Calu3 (cell line): ENCODE measurements at regions of chr10 and their contacts with region 1.

Region 1: DNA sequence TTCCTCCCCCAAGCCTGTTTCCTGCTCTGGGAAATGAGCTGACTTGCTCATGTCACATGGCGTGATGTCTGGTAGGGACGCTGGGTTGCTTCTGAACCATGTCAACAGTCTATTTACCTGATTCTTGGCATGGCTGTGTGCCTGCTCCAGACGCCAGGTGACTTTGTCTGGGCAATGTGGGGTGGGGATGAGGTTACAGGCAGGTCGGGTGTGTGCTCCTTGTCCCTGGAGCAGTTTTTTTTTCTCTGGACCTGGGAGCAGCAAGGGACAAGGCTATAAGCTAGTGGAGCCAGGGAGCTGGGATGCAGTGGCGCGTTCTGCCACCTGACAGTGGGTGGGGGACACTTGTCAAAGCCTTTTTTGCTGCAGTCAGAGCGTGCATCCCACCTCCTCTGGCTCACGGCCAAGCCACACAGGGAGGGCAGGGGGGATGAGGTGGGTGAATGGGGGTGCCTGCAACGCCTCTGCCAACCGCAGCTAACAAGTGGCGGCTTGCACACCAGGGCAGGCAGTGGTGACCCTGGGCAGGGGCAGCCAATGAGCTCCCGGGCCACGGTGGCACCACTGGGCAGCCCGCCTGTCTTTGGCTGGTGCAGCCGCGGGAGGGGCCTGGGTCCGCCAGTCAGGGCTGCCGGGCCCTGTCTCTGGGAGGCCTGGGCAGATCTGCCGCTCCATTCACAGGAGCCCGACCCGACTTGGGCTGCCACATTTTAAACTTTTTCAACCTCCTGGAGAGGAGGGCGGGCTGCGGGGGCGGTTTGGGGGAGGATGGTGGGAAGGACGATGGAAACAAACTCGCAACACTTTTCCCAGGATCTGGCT is 22.9 kb downstream of the DNAJB12 start:
- DNase-seq: peak; percentile 100
- H3K4me3 Mint-ChIP-seq: peak overlapping the region; percentile 51
- H3K27ac Mint-ChIP-seq: peak overlapping the region; percentile 100
- H3K4me1 Mint-ChIP-seq: peaks cover 83% of the 10 kb centered on the region
- H3K27me3 Mint-ChIP-seq: no peaks in the 10 kb centered on the region
- CTCF ChIP-seq: peak; percentile 66

Region 2: GRCh38 chr10:71957546-71958275 is 374.1 kb before region 1 on chr10:
- CTCF ChIA-PET with region 1: no interaction called
- intact Hi-C with region 1: loop called (anchors 10 kb)
- DNase-seq: no peak
- H3K4me3 Mint-ChIP-seq: no peak overlapping the region
- H3K27ac Mint-ChIP-seq: no peak overlapping the region
- H3K4me1 Mint-ChIP-seq: peaks cover 14% of the 10 kb centered on the region
- H3K27me3 Mint-ChIP-seq: peaks cover 16% of the 10 kb centered on the region
- CTCF ChIP-seq: no peak

Region 3: DNA sequence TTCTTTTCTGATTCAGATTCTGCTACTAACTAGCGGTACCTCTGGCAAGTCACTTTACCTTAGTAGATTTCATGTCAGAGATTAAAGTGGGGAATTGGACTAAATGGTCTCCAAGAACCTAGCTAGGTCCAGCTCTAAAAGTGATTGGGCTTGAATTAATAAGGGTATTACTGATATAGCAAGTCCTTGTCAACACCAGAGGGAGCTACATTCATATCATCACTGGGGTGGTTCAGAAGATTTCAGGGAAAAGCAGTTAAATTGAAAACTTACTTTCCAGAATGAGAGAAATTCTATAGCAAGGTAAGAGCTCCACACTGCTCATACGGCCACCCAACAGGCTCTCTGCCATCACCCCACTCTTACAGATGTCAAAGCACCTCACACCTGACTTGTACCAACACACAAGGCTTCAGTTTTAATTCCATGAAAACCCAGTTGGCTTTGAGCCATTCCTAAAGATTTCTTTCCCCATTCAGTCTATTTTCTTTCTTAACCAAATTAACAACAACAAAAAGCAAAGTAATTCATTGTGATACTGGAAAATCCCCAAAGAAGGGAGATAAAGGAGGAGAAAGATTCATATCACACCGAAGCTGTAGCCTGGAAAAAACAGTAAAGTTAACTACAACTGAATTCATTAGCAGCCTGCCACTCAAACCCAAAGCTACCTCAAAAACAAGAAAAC is 205.5 kb before region 1 on chr10:
- CTCF ChIA-PET with region 1: interaction called, 10 read pairs
- intact Hi-C with region 1: loop called (anchors 2 kb)
- DNase-seq: peak; percentile 24
- H3K4me3 Mint-ChIP-seq: no peak overlapping the region
- H3K27ac Mint-ChIP-seq: no peak overlapping the region
- H3K4me1 Mint-ChIP-seq: peaks cover 32% of the 10 kb centered on the region
- H3K27me3 Mint-ChIP-seq: no peaks in the 10 kb centered on the region
- CTCF ChIP-seq: no peak

Region 4: GRCh38 chr10:72278668-72279393 is 53.0 kb before region 1 on chr10:
- CTCF ChIA-PET with region 1: interaction called, 31 read pairs
- intact Hi-C with region 1: loop called (anchors 1 kb)
- DNase-seq: no peak
- H3K4me3 Mint-ChIP-seq: no peak overlapping the region
- H3K27ac Mint-ChIP-seq: peak overlapping the region; percentile 99
- H3K4me1 Mint-ChIP-seq: peaks cover 38% of the 10 kb centered on the region
- H3K27me3 Mint-ChIP-seq: no peaks in the 10 kb centered on the region
- CTCF ChIP-seq: no peak

Region 5: GRCh38 chr10:72616716-72617115 is 284.9 kb after region 1 on chr10:
- CTCF ChIA-PET with region 1: no interaction called
- intact Hi-C with region 1: no loop called
- DNase-seq: no peak
- H3K4me3 Mint-ChIP-seq: no peak overlapping the region
- H3K27ac Mint-ChIP-seq: peak overlapping the region; percentile 50
- H3K4me1 Mint-ChIP-seq: peaks cover 8% of the 10 kb centered on the region
- H3K27me3 Mint-ChIP-seq: no peaks in the 10 kb centered on the region
- CTCF ChIP-seq: no peak